T-cell (primary cell): ENCODE measurements at regions of chr6 and their contacts with region 1.

Region 1: DNA sequence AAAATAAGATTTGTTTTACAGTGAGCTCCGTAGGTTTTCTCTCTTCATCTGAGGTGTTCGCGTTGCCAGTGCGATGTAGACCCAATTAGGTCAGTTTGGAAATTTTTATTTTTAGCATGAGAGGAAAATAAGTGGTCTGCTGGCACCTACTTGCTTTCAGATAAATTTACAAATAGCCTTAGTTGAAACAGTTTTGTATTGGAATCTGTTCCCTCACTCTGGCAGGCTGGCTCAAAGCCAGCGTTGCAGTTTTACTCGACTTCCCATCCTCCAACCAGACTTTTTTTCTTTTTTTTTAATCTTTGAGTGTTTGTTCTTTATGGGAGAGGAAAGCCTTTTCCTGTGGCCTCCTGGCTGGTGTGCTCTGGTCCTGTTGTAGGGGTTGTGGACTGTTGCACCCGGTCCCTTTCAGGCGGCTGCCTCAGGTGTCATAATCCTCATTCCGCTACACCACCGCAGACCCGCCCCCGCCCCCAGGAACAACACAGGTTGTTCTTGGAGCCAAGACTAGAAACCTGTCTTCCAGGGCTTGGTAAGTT is 46.7 kb downstream of the TIAM2 start:
- DNase-seq: no peak
- ATAC-seq: no peak
- H3K4me3 ChIP-seq: no peak overlapping the region
- H3K4me3 Mint-ChIP-seq: no peak overlapping the region
- H3K27ac ChIP-seq: no peak overlapping the region
- H3K27ac Mint-ChIP-seq: no peak overlapping the region
- H3K4me1 ChIP-seq: no peaks in the 10 kb centered on the region
- H3K4me1 Mint-ChIP-seq: no peaks in the 10 kb centered on the region
- H3K27me3 ChIP-seq: peaks cover 0 to 3% of the 10 kb centered on the region in 2 experiments
- H3K27me3 Mint-ChIP-seq: no peaks in the 10 kb centered on the region

Region 2: DNA sequence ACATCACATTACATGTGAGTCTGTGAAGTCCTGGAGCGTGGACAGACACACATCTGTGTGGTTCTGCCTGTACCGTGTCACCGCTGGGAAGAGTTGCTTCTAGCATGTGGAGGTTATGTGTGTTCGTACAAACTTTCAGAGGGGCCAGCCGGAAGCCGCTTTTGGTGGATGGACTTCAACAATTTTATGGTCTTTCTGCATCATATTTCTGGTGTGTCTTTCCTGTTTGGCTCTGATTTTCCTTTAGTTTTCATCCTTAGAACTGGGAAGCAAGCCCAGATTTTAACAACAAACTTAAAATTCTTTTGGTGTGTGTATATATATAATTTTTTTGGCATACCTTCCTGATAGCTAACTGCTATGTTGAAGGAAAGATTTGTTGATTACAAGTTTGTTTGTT is 24.6 kb after region 1 on chr6:
- CTCF ChIA-PET with region 1: no interaction called
- POLR2A ChIA-PET with region 1: no interaction called
- DNase-seq: no peak
- ATAC-seq: no peak
- H3K4me3 ChIP-seq: no peak overlapping the region
- H3K4me3 Mint-ChIP-seq: no peak overlapping the region
- H3K27ac ChIP-seq: no peak overlapping the region
- H3K27ac Mint-ChIP-seq: no peak overlapping the region
- H3K4me1 ChIP-seq: no peaks in the 10 kb centered on the region
- H3K4me1 Mint-ChIP-seq: no peaks in the 10 kb centered on the region
- H3K27me3 ChIP-seq: peaks cover 0 to 2% of the 10 kb centered on the region in 2 experiments
- H3K27me3 Mint-ChIP-seq: peaks cover 0 to 1% of the 10 kb centered on the region in 2 donors

Region 3: DNA sequence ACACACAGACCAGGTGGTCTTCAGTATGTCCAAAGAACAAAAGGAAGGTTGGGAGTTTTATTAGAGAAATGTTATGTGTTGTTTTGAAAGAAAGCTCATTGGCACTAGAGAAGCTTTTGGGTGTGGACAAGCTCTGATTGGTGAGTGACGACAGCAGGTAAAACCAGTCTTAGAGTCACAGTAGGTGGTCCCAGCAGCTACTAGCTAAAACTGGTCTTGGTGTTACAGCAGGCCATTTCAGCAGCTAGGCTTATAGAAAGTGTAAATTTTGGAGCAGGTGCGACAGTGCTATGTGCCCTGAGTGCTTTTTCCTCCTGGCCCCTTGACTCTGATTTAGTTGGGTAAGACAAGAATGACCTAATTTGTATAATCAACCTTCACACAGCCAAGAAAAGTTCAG is 225.6 kb after region 1 on chr6:
- CTCF ChIA-PET with region 1: no interaction called
- POLR2A ChIA-PET with region 1: interaction called in 1 of 2 experiments, 15 read pairs
- DNase-seq: no peak
- ATAC-seq: no peak
- H3K4me3 ChIP-seq: no peak overlapping the region
- H3K4me3 Mint-ChIP-seq: no peak overlapping the region
- H3K27ac ChIP-seq: no peak overlapping the region
- H3K27ac Mint-ChIP-seq: peak overlapping the region in 1 of 2 donors; percentile 9
- H3K4me1 ChIP-seq: no peaks in the 10 kb centered on the region
- H3K4me1 Mint-ChIP-seq: peaks cover 10 to 16% (median 13%) of the 10 kb centered on the region in 3 donors
- H3K27me3 ChIP-seq: no peaks in the 10 kb centered on the region
- H3K27me3 Mint-ChIP-seq: no peaks in the 10 kb centered on the region

Region 4: DNA sequence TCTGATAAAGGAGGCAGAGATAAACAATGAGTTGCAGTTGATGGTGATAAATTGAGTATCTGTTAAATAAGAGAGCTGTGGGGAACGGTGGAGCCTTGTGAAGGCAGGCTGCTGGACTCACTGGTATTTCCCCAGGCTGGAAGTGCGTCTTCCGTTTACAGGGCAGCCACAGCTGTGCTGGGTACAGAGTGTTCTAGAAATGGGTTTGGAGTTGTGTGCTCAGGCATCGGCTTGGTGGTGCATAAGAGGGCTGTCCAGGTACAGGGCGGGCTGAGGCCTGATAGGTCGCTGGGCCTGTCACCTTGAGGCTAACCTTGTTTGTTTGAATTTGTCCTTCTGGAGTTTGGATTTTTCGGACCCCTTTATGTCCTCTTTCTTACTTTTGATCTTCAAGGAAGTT is 1774.7 kb after region 1 on chr6:
- CTCF ChIA-PET with region 1: no interaction called
- POLR2A ChIA-PET with region 1: interaction called in 1 of 2 experiments, 12 read pairs
- DNase-seq: peak in 2 of 35 experiments; percentile 6 to 43
- ATAC-seq: peak in 1 of 4 experiments; percentile 72
- H3K4me3 ChIP-seq: no peak overlapping the region
- H3K4me3 Mint-ChIP-seq: peak overlapping the region in 1 of 3 donors; percentile 28
- H3K27ac ChIP-seq: no peak overlapping the region
- H3K27ac Mint-ChIP-seq: no peak overlapping the region
- H3K4me1 ChIP-seq: peaks cover 8 to 31% of the 10 kb centered on the region in 2 experiments
- H3K4me1 Mint-ChIP-seq: peaks cover 82 to 93% (median 86%) of the 10 kb centered on the region in 3 donors
- H3K27me3 ChIP-seq: no peaks in the 10 kb centered on the region
- H3K27me3 Mint-ChIP-seq: no peaks in the 10 kb centered on the region